ENCODE measurements at regions of chr9 and their contacts with region 1.

Region 1: DNA sequence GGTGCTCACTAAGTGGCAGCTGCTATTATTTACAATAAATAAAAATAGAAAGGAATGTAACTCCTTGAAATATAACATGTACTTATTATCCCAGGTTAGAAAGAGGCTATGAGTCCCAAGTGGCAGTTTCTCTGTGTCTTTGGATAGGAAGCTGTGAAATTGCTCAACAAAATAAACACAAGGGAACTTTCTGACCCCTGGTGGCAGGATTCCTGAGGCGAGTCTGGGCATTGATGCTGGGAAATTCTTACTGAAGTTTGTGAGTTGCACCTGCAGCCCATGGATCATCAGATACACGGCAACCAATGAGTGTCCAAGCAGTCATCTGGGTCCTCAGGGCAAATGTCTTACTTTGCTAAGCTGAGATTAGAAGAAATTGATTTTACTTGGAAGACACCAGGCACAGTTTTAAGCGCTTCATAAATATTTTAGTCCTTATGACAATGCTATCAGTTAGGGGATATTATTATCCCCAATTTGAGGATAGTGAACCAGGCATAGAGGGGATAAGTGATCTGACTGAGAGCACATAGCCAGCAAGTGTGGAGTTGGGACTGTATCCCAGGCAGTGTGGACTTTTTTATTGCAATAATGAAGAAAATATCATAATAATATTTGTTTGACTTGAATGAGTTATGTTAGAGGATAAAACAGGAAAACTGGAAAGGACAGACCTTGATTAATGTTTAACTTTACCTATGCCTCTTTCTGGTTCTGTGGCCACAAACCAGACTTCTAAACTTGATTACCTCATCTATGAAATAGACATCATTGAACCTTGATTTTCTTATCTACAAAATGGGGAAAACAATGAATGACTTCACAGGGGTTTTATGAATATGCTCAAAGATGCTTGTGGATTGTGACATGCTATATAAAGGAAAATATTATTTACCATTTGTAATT is 265.5 kb upstream of the ADAMTSL1 start:
- DNase-seq: no peak
- H3K4me3 ChIP-seq: no peak overlapping the region
- H3K27ac ChIP-seq: no peak overlapping the region
- H3K27me3 ChIP-seq: no peaks in the 10 kb centered on the region
- CTCF ChIP-seq: peak; percentile 48

Region 2: GRCh38 chr9:17531642-17532254 is 676.7 kb before region 1 on chr9:
- CTCF ChIA-PET with region 1: interaction called, 13 read pairs
- POLR2A ChIA-PET with region 1: no interaction called
- DNase-seq: peak; percentile 13
- H3K4me3 ChIP-seq: peak overlapping the region; percentile 39
- H3K27ac ChIP-seq: no peak overlapping the region
- H3K27me3 ChIP-seq: peaks cover 5% of the 10 kb centered on the region
- CTCF ChIP-seq: peak; percentile 82

Region 3: GRCh38 chr9:18189871-18190670 is 18.3 kb before region 1 on chr9:
- CTCF ChIA-PET with region 1: interaction called, 12 read pairs
- POLR2A ChIA-PET with region 1: no interaction called
- DNase-seq: no peak
- H3K4me3 ChIP-seq: no peak overlapping the region
- H3K27ac ChIP-seq: no peak overlapping the region
- H3K27me3 ChIP-seq: no peaks in the 10 kb centered on the region
- CTCF ChIP-seq: no peak

Region 4: GRCh38 chr9:18229992-18230676 is 21.7 kb after region 1 on chr9:
- CTCF ChIA-PET with region 1: interaction called, 23 read pairs
- POLR2A ChIA-PET with region 1: no interaction called
- DNase-seq: no peak
- H3K4me3 ChIP-seq: no peak overlapping the region
- H3K27ac ChIP-seq: no peak overlapping the region
- H3K27me3 ChIP-seq: no peaks in the 10 kb centered on the region
- CTCF ChIP-seq: no peak

Region 5: DNA sequence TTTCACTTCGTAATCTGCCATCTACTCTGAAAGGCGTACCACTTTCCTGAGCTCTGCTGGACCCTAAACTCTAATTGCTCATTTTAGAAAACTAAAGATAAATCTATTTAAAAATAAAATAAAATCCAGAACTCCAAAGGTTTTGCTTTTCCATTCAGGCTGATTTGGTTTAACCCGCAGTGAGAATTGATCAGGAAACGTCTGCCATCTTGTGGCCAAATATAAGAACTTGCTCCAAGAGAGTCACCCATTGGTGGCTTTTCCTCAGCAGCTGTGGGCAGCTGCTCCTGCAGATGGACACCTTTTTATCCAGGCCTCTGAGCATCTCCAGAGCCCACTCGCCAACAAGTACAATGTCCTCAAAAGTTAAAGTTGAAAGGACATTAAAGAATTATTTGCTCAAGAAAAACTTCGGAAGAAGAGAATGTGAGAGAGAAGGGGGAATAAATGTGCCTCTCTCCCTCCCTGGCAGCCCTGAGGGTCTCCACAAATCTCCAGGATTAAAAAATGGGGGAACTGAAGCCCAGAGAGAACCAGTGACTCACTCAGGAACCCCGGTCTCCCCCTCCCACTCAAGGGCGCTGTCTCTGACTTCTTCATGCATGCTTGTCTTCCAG is 820.5 kb after region 1 on chr9:
- CTCF ChIA-PET with region 1: interaction called, 11 read pairs
- POLR2A ChIA-PET with region 1: no interaction called
- DNase-seq: peak; percentile 52
- H3K4me3 ChIP-seq: no peak overlapping the region
- H3K27ac ChIP-seq: no peak overlapping the region
- H3K27me3 ChIP-seq: peaks cover 2% of the 10 kb centered on the region
- CTCF ChIP-seq: peak; percentile 74